Heart left ventricle (tissue), 16 donors: ENCODE measurements at regions of chr7 and their contacts with region 1.

Region 1: GRCh38 chr7:82443547-82444219 is at the start of gene CACNA2D1:
- DNase-seq: peak; percentile 89 to 92 (median 90)
- ATAC-seq: peak; percentile 92 to 97 (median 96)
- H3K4me3 ChIP-seq: peak within 1 kb of the TSS; percentile 57 to 88 (median 77)
- H3K27ac ChIP-seq: peak within 1 kb of the TSS; percentile 85 to 96 (median 92)
- H3K4me1 ChIP-seq: peaks cover 0 to 32% (median 10%) of the 10 kb centered on the region in 12 donors
- H3K27me3 ChIP-seq: peaks cover 0 to 36% (median 0%) of the 10 kb centered on the region in 9 donors
- CTCF ChIP-seq: peak in 10 of 12 donors; percentile 14 to 62 (median 38)
- POLR2A ChIP-seq: peak in 1 of 2 donors; percentile 23
- total RNA-seq, gene CACNA2D1: 39.1 to 122 (median 60.9) TPM

Region 2: GRCh38 chr7:82164813-82165212 is 278.9 kb before region 1 on chr7:
- intact Hi-C with region 1: loop called in 2 of 10 experiments (anchors 5 to 10 kb)
- DNase-seq: peak in 4 of 5 donors; percentile 15 to 35 (median 26)
- ATAC-seq: peak; percentile 45 to 86 (median 68)
- H3K4me3 ChIP-seq: no peak overlapping the region
- H3K27ac ChIP-seq: no peak overlapping the region
- H3K4me1 ChIP-seq: peaks cover 0 to 16% (median 7%) of the 10 kb centered on the region in 12 donors
- H3K27me3 ChIP-seq: no peaks in the 10 kb centered on the region
- CTCF ChIP-seq: peak in 10 of 12 donors; percentile 3 to 55 (median 34)
- POLR2A ChIP-seq: no peak

Region 3: DNA sequence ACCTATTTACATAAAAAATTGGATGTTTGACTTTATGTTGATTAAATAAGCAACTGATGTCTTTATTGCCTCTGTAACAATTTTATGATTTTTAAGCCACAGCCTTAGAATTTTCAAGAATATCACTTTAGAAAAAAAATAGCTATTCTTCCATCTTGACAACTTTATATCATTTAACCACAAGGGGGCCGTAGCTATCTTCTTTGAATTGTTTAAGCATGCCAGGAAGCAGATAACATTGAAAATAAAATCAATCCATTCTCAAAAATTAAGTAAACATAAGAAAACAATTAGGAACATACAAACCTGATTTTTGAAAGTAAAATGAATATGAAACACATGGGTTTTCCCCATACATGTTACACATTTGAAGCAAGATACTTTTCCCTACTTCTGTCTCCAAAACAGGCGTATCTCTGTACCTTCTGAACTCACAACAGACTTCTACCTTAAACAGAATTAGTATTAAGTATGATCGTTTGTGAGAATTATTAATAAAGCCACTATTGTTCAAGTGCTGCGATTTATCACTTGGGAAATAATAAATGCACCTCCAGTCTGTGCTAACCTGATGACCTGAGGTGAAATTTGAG is 209.1 kb before region 1 on chr7:
- intact Hi-C with region 1: loop called in 8 of 10 experiments (anchors 2 to 10 kb)
- DNase-seq: no peak
- ATAC-seq: peak in 1 of 4 donors; percentile 55
- H3K4me3 ChIP-seq: no peak overlapping the region
- H3K27ac ChIP-seq: no peak overlapping the region
- H3K4me1 ChIP-seq: peaks cover 0 to 23% (median 6%) of the 10 kb centered on the region in 12 donors
- H3K27me3 ChIP-seq: no peaks in the 10 kb centered on the region
- CTCF ChIP-seq: peak; percentile 37 to 74 (median 60)
- POLR2A ChIP-seq: no peak

Region 4: DNA sequence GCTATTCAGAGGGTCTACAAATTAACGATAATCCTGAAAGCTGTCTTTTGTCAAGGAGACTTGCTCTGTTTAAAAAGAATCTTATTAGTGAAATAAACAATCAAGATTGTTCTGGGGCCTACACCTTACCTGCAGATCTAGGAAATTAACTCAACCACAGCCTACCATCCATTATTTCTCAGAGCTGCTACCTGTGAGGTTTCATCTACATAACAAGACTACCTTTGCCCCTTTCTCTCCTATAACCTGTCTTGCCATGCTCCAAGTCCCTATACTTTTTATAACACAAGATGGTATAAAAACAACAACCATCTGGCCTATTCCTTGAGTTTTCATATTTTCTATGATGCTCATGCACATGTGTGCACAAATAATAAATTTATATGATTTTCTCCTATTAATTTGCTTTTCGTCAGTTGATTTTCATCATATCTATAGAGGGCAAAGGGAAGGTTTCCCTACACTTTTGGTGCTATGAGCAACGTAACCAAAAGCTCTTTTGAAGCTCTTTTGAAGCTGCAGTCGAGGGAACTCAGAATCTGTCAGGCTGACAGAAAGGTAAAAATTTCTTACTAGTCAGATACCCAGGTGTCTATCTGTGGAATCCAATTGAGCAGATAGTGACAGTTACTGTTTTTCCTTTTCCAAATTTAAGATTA is 138.2 kb before region 1 on chr7:
- intact Hi-C with region 1: no loop called
- DNase-seq: no peak
- ATAC-seq: no peak
- H3K4me3 ChIP-seq: no peak overlapping the region
- H3K27ac ChIP-seq: no peak overlapping the region
- H3K4me1 ChIP-seq: no peaks in the 10 kb centered on the region
- H3K27me3 ChIP-seq: no peaks in the 10 kb centered on the region
- CTCF ChIP-seq: no peak
- POLR2A ChIP-seq: no peak

Region 5: GRCh38 chr7:82375713-82376112 is 68.0 kb before region 1 on chr7:
- intact Hi-C with region 1: loop called in 1 of 10 experiments (anchors 5 kb)
- DNase-seq: no peak
- ATAC-seq: no peak
- H3K4me3 ChIP-seq: no peak overlapping the region
- H3K27ac ChIP-seq: no peak overlapping the region
- H3K4me1 ChIP-seq: peaks cover 0 to 34% (median 9%) of the 10 kb centered on the region in 12 donors
- H3K27me3 ChIP-seq: no peaks in the 10 kb centered on the region
- CTCF ChIP-seq: no peak
- POLR2A ChIP-seq: no peak

Region 6: DNA sequence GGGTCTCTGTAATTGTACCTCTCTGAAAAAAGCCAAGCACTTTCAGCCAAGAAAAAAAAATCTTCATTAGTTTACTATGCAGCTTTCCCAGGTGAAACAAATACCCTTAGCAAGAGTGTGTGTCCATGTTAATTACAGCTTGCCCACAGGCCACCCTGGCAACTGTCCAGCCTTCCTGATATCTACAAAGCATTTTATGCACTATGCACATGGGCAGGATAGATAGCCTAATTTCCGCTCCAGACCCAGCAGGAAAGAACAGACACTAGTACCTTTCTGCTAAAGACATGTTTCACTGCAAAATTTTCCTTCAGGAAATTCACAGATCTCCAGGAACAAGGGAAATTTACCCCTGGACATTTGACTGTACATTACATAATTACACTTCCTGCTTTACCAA is 24.5 kb before region 1 on chr7:
- intact Hi-C with region 1: loop called in 1 of 10 experiments (anchors 2 kb)
- DNase-seq: peak in 4 of 5 donors; percentile 60 to 74 (median 67)
- ATAC-seq: peak; percentile 49 to 79 (median 58)
- H3K4me3 ChIP-seq: no peak overlapping the region
- H3K27ac ChIP-seq: no peak overlapping the region
- H3K4me1 ChIP-seq: peaks cover 0 to 57% (median 8%) of the 10 kb centered on the region in 12 donors
- H3K27me3 ChIP-seq: no peaks in the 10 kb centered on the region
- CTCF ChIP-seq: no peak
- POLR2A ChIP-seq: no peak

Region 7: GRCh38 chr7:82481499-82482097 is 37.9 kb after region 1 on chr7:
- intact Hi-C with region 1: loop called in 1 of 10 experiments (anchors 5 kb)
- DNase-seq: no peak
- ATAC-seq: no peak
- H3K4me3 ChIP-seq: no peak overlapping the region
- H3K27ac ChIP-seq: no peak overlapping the region
- H3K4me1 ChIP-seq: peaks cover 0 to 5% (median 0%) of the 10 kb centered on the region in 12 donors
- H3K27me3 ChIP-seq: no peaks in the 10 kb centered on the region
- CTCF ChIP-seq: peak; percentile 61 to 84 (median 73)
- POLR2A ChIP-seq: no peak